ENCODE measurements at regions of chr12 and their contacts with region 1.

Region 1: GRCh38 chr12:27818401-27818918 is 38.4 kb upstream of the MANSC4 start:
- DNase-seq: no peak

Region 2: GRCh38 chr12:27723212-27723611 is 95.2 kb before region 1 on chr12:
- intact Hi-C with region 1: loop called in 1 of 2 experiments (anchors 10 kb)
- DNase-seq: no peak

Region 3: DNA sequence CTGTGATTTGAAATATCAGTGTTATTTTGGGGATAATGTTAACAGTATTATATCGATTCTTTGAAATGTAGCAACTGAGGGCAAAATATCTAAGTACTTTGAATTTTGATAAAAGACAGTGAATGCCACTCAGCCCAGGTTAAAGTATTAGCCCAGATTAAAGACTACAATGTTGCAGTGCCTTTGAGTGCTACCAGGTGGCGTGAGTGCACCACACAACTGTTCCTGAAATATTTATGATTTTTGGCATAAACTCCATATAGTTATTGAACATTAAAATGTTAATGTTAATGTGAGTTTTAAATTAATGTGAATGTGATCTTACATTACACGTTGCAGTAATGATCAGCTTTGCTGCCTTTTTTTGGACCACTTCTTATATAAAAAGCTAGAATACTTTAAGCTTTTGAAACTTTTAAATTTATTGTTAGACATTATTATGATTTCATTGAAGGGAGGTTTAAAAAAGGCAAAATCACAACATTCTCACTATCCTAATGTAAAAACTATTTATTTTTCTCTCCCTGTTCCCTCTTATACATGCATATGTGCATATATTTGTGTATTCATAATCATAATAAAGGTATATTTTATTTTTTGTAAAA is 85.3 kb before region 1 on chr12:
- intact Hi-C with region 1: loop called (anchors 10 kb)
- DNase-seq: no peak